Activated CD4-positive, alpha-beta T cell treated with anti-CD3 and anti-CD28 coated beads for 36 hours (primary cell): ENCODE measurements at regions of chr11 and their contacts with region 1.

Region 1: DNA sequence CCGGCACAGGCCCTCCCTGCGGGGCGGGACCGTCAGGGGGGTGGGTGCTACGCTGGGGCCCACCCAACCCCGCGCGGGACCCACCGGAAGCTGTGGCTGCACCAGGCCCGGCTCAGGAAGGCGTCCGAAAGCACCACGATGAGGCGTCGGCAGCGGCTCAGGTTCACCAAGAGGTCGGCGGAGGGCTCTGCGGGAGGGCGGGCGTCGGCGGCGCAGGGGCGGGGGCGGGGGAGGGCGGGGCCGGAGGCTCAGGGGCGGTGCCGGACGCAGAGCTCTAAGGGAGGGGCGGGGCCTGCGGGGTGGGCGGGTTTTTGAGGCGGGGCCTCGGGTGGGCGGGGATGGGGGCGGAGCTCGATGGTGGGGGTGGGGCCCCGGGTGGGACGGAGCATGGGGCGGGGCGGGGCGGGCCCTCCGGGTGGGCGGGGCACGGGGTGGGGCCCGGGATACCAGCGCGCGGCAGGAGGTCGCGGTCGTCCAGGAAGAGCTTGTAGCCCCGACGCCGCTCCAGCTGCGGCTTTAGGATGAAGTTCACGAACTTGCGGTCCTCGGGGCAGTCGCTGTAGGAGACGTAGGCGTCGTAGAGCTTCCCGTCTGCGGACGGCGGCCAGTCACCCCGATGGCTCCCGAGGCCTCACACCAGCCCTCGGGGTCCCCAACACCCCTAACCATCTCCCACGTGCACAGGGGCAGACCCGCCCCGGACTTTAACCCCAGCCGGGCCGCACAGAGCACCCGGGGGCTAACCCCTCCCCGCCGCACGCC is 7.6 kb downstream of the SIGIRR start:
- DNase-seq: peak; percentile 93
- ATAC-seq: peak; percentile 90
- H3K4me3 Mint-ChIP-seq: no peak overlapping the region
- H3K27ac Mint-ChIP-seq: no peak overlapping the region
- H3K4me1 Mint-ChIP-seq: peaks cover 5% of the 10 kb centered on the region
- H3K27me3 Mint-ChIP-seq: no peaks in the 10 kb centered on the region

Region 2: GRCh38 chr11:207208-207862 is 199.8 kb before region 1 on chr11 and contains the starts of genes BET1L and RIC8A:
- CTCF ChIA-PET with region 1: no interaction called
- POLR2A ChIA-PET with region 1: no interaction called
- intact Hi-C with region 1: loop called in 1 of 2 experiments (anchors 1 kb)
- DNase-seq: peak; percentile 99
- ATAC-seq: peak; percentile 89
- H3K4me3 Mint-ChIP-seq: peak within 1 kb of the TSS; percentile 94
- H3K27ac Mint-ChIP-seq: peak within 1 kb of the TSS; percentile 99
- H3K4me1 Mint-ChIP-seq: peaks cover 56% of the 10 kb centered on the region
- H3K27me3 Mint-ChIP-seq: no peaks in the 10 kb centered on the region
- total RNA-seq, gene BET1L: 45.5 to 49.4 TPM
- total RNA-seq, gene RIC8A: 104 to 124 TPM

Region 3: DNA sequence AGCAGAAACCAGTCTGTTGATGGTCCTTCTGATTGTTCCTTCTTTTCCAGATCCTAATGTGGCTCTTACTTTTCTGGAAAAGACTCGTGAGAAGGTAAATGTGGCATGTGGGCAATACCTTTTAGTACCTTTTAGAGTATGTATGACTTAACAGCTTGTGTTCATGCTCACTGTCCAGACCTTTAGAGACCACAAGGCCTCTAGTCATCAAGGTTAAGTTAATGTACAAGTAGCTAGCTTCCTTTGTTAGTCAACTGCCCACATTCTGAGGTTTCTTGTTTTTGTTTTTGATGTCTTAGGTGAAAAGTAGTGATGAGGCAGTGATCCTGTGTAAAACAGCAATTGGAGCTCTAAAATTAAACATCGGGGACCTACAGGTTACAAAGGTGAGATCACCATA is 162.8 kb before region 1 on chr11:
- CTCF ChIA-PET with region 1: no interaction called
- POLR2A ChIA-PET with region 1: no interaction called
- intact Hi-C with region 1: no loop called
- DNase-seq: no peak
- ATAC-seq: peak; percentile 21
- H3K4me3 Mint-ChIP-seq: no peak overlapping the region
- H3K27ac Mint-ChIP-seq: peak overlapping the region; percentile 1
- H3K4me1 Mint-ChIP-seq: peaks cover 37% of the 10 kb centered on the region
- H3K27me3 Mint-ChIP-seq: no peaks in the 10 kb centered on the region

Region 4: DNA sequence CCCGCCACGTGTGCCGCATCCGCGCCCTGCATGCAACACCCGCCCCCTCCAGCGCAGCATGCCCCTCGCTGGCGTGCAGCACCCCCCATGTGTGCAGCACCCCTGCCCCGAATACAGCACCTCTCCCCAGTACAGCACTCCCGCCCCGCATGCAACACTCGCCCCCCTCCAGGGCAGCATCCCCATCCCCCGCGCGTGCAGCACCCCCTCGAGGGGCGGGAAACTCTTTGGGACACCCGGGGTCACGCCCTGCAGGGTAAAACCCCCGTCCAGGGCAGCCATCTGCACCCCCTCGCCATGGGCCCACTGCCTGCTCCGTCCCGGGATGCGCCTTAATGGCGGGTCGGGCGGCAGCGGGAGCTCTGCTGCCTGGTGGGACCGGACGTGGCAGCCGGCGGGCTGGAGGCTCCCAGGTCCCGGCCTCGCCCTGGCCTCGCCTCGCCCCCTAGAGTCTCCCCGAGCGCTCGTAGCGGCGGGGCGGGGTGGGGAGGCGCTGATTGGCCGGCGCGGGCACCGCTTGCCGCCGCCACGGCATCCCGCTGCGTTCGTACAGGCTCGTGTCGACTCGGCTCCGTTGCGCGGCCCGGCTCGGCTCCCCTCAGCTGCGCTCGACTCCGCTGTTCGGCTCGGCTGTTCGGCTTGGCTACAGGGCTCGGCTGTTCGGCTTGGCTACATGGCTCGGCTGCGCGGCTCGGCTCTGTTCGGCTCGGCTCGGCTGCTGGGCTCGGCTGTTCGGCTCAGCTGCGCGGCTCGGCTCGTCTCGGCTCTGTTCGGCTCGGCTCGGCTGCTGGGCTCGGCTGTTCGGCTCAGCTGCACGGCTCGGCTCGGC is 982.2 kb after region 1 on chr11:
- CTCF ChIA-PET with region 1: no interaction called
- POLR2A ChIA-PET with region 1: no interaction called
- intact Hi-C with region 1: no loop called
- DNase-seq: peak; percentile 99
- ATAC-seq: peak; percentile 99
- H3K4me3 Mint-ChIP-seq: peak overlapping the region; percentile 53
- H3K27ac Mint-ChIP-seq: no peak overlapping the region
- H3K4me1 Mint-ChIP-seq: peaks cover 9% of the 10 kb centered on the region
- H3K27me3 Mint-ChIP-seq: peaks cover 25% of the 10 kb centered on the region